Activated CD4-positive, alpha-beta memory T cell treated with anti-CD3 and anti-CD28 coated beads for 36 hours (primary cell): ENCODE measurements at regions of chr11 and their contacts with region 1.

Region 1: DNA sequence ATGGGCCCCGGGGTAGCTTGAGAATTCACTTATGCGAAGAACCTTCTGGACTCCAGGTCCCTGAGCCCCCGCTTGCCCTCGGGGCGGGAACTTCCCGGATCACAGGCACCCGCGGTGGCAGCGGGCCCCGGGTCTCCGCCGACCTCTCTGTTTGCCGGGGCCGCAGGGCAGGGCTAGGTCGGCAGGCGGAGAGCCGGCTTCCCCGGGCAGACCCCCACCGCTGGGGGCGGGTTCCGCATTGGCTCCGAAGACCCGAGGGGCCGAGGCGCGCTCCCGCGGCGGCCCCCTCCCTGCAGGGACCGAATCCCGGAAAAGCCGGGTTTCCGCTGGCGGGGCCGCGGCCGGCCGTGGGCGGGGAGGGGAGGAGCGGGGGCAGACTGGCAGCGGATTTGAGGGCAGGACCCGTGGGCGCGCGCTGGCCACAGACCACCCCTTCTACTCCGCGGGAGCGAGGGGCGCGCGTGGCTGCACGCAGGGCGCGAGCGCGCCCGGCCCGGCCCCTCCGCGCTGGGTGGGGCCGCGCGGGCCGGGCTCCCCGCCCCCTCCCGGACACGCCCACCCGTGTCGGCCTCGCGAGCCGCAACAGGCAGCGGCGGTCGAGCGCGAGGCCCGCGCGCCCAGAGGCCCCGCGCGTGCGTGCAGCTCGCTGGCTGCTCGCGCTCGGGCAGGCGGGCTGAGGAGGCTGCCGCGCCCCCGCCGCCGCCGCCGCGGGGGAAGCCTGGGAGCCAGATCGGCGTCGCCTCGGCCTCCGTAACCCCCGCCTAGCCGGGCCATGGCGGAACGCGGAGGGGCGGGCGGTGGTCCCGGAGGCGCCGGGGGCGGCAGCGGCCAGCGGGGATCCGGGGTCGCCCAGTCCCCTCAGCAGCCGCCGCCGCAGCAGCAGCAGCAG is at the start of gene PACS1:
- DNase-seq: peak; percentile 85
- H3K4me3 Mint-ChIP-seq: peak within 1 kb of the TSS; percentile 97
- H3K27ac Mint-ChIP-seq: peak within 1 kb of the TSS; percentile 96
- H3K4me1 Mint-ChIP-seq: peaks cover 62% of the 10 kb centered on the region
- H3K27me3 Mint-ChIP-seq: no peaks in the 10 kb centered on the region
- total RNA-seq, gene PACS1: 82.0 to 84.1 TPM

Region 2: DNA sequence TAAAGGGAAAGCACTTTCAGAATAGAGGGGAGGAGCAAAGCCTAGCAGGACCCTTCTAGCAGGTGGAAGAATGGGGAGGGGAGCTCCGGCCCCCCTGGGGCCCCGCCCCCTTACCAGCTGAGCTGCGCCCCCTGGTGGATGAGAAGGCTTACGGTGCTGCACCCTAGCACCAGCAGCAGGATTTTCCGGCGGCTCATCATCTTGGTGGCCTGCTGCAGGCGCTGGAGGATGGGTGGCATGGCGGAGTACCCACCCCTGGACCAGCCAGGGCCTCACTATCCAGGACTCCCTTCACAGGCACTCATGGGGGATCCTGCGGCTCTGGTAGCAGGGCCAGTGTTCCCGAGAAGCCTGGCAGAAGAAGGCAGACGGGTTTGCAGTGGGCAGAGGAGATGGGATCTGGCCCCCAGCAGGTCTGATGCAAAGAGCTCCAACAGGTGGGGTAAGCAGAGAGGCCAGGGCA is 24.8 kb before region 1 on chr11:
- CTCF ChIA-PET with region 1: interaction called, 18 read pairs
- POLR2A ChIA-PET with region 1: interaction called, 32 read pairs
- intact Hi-C with region 1: no loop called
- DNase-seq: peak; percentile 88
- H3K4me3 Mint-ChIP-seq: peak overlapping the region; percentile 42
- H3K27ac Mint-ChIP-seq: peak overlapping the region; percentile 82
- H3K4me1 Mint-ChIP-seq: peaks cover 21% of the 10 kb centered on the region
- H3K27me3 Mint-ChIP-seq: peaks cover 5% of the 10 kb centered on the region

Region 3: GRCh38 chr11:66081505-66081904 is 11.5 kb after region 1 on chr11:
- CTCF ChIA-PET with region 1: interaction called, 69 read pairs
- POLR2A ChIA-PET with region 1: interaction called, 22 read pairs
- intact Hi-C with region 1: loop called (anchors 1 kb)
- DNase-seq: peak; percentile 86
- H3K4me3 Mint-ChIP-seq: peak overlapping the region; percentile 73
- H3K27ac Mint-ChIP-seq: peak overlapping the region; percentile 95
- H3K4me1 Mint-ChIP-seq: peaks cover 88% of the 10 kb centered on the region
- H3K27me3 Mint-ChIP-seq: no peaks in the 10 kb centered on the region

Region 4: DNA sequence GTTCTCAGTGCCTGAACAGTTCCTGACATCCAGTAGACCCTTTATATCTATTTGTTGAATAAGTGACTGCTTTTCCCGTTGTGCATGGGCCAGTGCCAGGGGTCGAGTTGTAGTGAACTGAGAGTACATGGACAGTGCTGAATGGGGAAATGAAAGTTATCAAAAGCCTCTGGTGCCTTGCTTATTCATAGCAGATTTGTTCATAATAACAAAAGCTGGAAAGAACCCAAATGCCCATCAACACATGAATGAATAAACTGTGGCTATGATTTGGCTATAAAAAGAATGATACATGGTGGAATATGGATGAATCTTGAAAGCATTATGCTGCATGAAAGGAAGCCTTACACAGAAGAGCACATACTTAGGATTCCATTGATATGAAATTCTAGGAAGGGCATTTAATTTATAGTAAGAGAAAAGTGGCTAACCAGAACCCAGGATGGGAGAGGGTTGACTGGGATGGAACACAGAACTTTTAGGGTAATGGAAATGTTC is 42.7 kb after region 1 on chr11:
- CTCF ChIA-PET with region 1: interaction called, 24 read pairs
- POLR2A ChIA-PET with region 1: interaction called, 3 read pairs
- intact Hi-C with region 1: no loop called
- DNase-seq: no peak
- H3K4me3 Mint-ChIP-seq: no peak overlapping the region
- H3K27ac Mint-ChIP-seq: peak overlapping the region; percentile 89
- H3K4me1 Mint-ChIP-seq: peaks cover 92% of the 10 kb centered on the region
- H3K27me3 Mint-ChIP-seq: no peaks in the 10 kb centered on the region

Region 5: DNA sequence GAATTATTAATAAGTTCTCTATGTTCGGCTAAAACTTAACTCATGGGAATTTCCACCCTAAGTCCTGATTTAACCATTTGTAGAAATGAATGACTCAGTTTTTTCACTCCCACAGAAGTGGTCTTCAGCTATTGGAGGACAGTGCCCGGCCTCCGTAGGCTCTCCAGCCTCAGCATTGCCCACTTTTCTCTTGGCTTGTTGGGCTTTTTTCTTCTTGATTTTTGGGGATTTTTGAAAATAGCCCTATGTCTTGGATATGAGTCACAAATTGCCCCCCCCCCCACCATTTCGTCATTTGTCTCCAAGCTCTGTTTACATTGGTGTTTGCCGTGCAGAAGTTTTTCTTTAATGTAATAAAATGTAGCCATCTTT is 66.8 kb after region 1 on chr11:
- CTCF ChIA-PET with region 1: interaction called, 101 read pairs
- POLR2A ChIA-PET with region 1: interaction called, 3 read pairs
- intact Hi-C with region 1: loop called (anchors 1 kb)
- DNase-seq: peak; percentile 48
- H3K4me3 Mint-ChIP-seq: no peak overlapping the region
- H3K27ac Mint-ChIP-seq: peak overlapping the region; percentile 65
- H3K4me1 Mint-ChIP-seq: peaks cover 65% of the 10 kb centered on the region
- H3K27me3 Mint-ChIP-seq: no peaks in the 10 kb centered on the region